ENCODE measurements at regions of chr6 and their contacts with region 1.

Region 1: DNA sequence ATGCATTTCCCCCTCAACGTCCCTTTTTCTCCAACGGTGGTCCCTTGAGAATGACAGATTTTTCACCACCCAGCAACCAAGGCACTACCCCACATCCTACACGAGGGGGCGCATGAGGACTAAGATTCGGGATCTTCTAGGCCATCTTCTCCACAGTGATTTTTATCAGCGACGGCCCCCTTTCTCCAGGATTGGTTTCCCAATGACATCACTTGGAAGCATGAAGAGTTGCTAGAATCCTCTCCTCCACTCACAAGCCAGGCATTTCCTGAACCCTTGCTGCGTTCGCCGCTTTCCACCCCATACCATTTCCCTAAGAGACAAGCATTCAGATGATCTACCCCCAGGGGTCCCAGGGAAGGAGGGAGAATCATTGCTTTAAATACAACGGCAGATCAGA is 252.0 kb downstream of the HIVEP2 start:
- DNase-seq: peak; percentile 83
- ATAC-seq: peak; percentile 91

Region 2: GRCh38 chr6:142728910-142729481 is 36.1 kb after region 1 on chr6:
- intact Hi-C with region 1: no loop called
- DNase-seq: no peak
- ATAC-seq: peak; percentile 45

Region 3: DNA sequence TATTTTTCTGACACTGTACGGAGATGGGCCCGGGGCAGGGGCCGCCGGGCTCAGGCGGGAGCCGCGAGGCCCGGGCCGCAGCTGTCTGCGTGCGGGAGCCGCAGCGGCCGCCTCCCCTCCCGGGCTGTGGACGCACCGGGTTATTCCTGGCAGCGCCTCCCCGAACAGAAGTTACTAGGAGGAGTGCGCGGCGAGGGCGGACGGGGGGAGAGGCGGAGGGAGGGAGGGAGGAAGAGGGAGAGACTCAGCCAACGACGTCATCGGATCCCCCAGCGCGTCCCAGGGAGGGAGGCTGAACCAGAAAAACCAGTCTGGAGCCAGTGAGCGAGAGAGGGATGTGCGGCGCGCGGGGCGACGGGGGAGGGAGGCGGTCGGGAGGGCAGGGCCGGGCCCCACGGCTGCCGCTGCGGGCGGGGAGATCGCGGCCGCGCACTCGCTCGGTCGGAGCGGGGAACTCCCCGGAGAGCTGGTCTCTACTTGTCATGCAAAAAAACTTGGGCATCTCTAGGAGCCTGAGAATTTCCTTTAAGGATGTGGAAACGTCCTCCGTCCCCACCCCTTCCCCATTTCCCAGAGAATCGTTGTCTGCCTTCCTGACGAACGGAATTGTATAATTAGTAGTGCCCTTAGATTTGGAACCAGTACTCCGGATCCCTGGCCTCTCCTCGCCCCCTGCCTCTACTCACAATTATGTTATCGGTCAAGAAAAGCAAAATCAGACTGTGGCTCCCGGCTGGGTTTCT is 253.4 kb after region 1 on chr6:
- intact Hi-C with region 1: loop called (anchors 10 kb)
- DNase-seq: peak; percentile 99
- ATAC-seq: peak; percentile 91

Region 4: GRCh38 chr6:143026696-143027449 is 333.9 kb after region 1 on chr6:
- intact Hi-C with region 1: loop called (anchors 10 kb)
- DNase-seq: no peak
- ATAC-seq: peak; percentile 64

Region 5: GRCh38 chr6:143427109-143427817 is 734.3 kb after region 1 on chr6:
- intact Hi-C with region 1: loop called (anchors 10 kb)
- DNase-seq: peak; percentile 83
- ATAC-seq: peak; percentile 97